ENCODE measurements at regions of chr16 and their contacts with region 1.

Region 1: DNA sequence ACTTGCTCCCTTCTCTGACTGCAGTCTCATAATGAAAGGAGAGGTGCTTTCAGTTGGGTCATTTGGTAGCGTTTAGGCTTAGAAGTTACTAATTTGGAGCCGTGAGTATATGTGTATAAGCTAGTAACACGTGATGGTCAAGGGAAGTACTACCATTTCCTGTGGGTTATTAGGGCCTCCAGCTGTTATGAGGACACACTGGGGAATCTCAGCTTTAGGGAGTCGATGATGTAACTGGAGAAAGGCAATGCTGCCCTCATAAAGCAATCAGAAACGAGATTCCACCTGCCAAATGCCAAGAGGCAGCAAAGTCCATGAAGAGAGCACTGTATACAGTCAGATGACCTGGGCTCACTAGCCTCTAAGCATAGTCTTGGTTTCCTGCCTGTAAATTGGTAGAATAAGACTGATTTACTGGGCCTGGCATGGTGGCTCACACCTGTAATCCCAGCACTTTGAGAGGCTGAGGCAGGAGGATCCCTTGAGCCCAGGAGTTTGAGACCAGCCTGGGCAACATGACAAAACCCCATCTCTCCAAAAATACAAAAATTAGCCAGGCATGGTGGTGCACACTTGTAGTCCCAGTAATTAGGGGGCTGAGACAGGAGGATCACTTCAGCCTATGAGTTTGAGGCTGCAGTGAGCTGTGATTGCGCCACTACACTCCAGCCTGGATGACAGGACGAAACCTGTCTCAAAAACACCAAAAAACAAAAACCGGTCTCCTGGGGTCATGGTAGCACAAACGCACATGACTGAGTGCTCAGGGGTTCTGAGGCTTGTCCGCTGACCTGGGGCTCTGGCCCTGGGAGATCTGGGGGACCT is 53.0 kb downstream of the SF3B3 start:
- DNase-seq: peak; percentile 35

Region 2: GRCh38 chr16:70589998-70590471 is 13.4 kb after region 1 on chr16:
- intact Hi-C with region 1: loop called in 1 of 2 experiments (anchors 1 kb)
- DNase-seq: no peak

Region 3: GRCh38 chr16:70646260-70647241 is 69.9 kb after region 1 on chr16 and contains the start of gene IL34:
- intact Hi-C with region 1: loop called (anchors 10 kb)
- DNase-seq: peak; percentile 82
- total RNA-seq, gene IL34: 4.0 to 4.3 TPM

Measured in posterior vena cava (tissue), 2 donors.